PC-9 (cell line): ENCODE measurements at regions of chr7 and their contacts with region 1.

Region 1: DNA sequence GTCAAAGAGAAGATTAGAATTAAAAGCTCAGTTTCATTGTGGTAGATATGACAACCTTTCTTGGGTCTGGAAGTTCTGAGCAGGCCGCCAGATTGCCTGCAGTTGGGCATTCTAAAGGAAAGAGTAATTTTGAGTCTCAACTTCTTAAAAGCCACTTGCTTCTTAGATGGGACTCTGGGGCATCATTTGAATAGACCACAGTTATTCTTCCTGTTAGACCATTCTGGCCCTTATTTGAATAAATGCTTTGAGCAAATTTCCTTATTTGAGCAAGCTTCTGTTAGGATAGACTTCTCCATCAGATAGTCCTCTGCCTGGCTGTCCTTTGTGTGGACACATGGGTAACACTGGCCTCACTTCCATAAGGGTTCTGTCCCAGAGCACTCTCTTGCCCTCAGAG is 40.2 kb downstream of the SND1 start:
- DNase-seq: no peak
- H3K4me3 ChIP-seq: no peak overlapping the region
- H3K27ac ChIP-seq: no peak overlapping the region
- H3K4me1 ChIP-seq: no peaks in the 10 kb centered on the region
- H3K27me3 ChIP-seq: no peaks in the 10 kb centered on the region
- CTCF ChIP-seq: no peak

Region 2: DNA sequence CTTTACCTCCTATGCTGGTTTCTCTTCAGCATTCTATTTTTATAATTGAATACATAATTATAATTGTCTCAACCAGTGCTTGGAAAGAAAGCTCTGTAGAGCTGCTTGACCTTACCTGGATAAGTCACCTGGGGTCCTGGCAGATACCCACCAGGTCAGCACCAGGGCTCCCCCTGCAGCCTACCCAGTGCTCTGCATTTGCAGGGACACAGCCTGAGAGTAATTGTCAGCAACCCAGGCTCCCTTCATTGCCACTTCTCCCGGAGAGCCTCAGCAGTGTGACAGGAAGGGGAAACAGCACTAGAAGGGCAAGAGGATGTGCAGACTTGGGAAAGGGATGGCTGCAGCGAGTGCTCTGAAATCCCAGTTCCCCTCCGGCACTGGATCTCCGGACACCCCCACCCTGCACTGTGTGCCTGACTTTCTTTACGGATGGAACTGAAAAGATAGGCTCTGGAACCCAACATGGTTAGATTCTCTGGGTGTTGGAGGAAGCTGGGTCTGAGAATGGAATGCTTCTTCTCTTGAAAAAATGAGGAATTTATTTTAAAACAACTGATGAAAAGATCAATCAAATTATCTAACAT is 62.8 kb before region 1 on chr7:
- CTCF ChIA-PET with region 1: no interaction called
- POLR2A ChIA-PET with region 1: interaction called, 15 read pairs
- intact Hi-C with region 1: no loop called
- DNase-seq: peak in 1 of 2 experiments; percentile 17
- H3K4me3 ChIP-seq: no peak overlapping the region
- H3K27ac ChIP-seq: no peak overlapping the region
- H3K4me1 ChIP-seq: no peaks in the 10 kb centered on the region
- H3K27me3 ChIP-seq: 0 out of 2 replicates have a peak, but pooled peaks cover 4% of the 10 kb centered on the region
- CTCF ChIP-seq: peak; percentile 60; the same call in 1 of the 2 replicates

Region 3: DNA sequence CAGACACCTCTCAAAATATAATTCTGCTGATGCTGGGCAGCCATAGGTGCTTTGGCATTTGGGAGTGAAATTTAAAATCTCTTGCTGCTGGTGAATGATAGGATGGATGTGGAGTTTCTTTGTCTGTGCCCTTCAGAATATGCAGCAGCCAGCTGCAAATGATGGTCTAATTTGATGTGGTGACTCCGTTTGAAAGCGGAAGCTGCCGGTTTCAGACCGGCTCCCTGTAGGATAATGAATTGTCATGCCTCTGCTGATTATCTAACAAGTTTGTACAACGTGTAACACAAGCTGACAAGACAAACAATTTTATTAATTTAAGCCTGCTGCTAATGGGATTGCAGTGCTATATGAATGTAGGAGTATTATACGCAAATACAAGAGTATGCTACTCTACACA is 63.3 kb after region 1 on chr7:
- CTCF ChIA-PET with region 1: no interaction called
- POLR2A ChIA-PET with region 1: no interaction called
- intact Hi-C with region 1: no loop called
- DNase-seq: no peak
- H3K4me3 ChIP-seq: no peak overlapping the region
- H3K27ac ChIP-seq: no peak overlapping the region
- H3K4me1 ChIP-seq: no peaks in the 10 kb centered on the region
- H3K27me3 ChIP-seq: no peaks in the 10 kb centered on the region
- CTCF ChIP-seq: no peak